ENCODE measurements at regions of chr12 and their contacts with region 1.

Region 1: DNA sequence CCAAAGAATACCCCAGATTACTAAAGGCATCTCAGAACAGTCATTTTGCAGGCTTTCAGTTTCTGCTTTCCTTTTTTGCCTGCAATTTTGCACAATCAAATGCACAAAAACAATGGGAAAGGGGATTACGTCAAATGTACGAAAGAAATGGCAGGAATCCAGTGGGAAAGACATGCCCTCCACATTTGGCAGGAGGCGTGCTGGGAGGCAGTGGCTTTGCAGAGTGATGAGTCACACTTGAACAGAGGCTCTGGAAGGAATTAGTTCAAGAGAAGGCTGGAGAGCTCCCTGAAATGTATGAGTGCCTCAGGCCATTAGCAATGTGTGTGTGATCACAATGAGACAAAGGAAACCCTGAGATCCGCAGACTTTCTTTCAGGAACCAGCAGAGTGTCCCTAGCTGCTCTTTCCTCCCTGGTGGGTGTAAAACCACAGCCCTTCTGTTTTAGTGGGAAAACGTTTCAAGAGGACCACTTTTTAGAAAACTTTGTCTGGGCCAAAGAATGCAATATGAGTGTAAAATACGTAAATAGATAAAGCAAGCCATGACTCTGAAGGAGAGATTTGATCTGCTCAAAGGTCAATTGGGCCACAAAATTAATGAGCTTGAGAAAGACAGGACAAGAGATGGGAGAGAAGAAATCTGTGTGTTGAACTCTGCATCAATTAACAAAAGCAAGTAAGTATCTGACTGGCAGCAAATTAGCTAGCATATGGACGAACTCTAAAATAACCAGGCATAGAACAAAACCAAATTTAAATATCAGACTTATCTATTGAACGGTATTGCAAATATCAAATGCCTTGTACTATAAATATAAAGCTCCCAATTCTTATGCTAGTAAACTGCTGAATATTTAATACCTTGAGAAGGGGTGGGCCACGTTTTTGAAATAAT is 155.4 kb upstream of the PDE3A start:
- DNase-seq: peak; percentile 95
- H3K4me3 ChIP-seq: peak overlapping the region in 2 of 4 donors; percentile 15 to 21
- H3K27ac ChIP-seq: peak overlapping the region; percentile 74 to 88 (median 78)
- H3K4me1 ChIP-seq: peaks cover 0 to 38% (median 32%) of the 10 kb centered on the region in 4 donors
- H3K27me3 ChIP-seq: no peaks in the 10 kb centered on the region
- CTCF ChIP-seq: no peak
- EP300 ChIP-seq: peak in 1 of 4 donors; percentile 71
- POLR2A ChIP-seq: no peak

Region 2: DNA sequence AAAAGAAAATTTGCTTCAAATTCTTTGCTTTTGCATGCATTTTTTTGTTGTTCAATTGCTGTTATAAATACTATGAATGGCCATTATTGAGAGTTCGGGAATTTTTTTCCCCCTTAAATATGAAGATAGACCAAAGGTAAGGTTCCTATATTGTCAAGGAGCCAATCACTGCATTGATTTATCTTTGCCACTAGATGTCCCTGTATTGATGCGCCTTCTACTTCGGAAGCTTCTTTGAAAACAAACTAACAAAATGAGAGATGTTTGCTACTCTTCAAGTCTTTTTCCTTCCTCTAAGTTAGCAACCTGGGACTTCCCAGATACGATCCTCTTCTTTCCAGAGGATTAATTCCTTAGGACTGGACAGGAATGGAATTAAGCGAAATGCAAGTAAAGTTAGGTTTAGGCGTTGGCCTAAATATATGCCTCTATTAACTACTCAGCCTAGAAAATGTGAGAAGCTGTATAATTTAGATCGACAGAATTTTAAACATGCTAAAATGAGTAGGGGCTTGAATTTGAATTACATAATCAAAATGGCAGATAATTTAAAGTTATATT is 455.5 kb before region 1 on chr12:
- intact Hi-C with region 1: loop called (anchors 5 kb)
- DNase-seq: no peak
- H3K4me3 ChIP-seq: no peak overlapping the region
- H3K27ac ChIP-seq: no peak overlapping the region
- H3K4me1 ChIP-seq: peaks cover 0 to 3% (median 0%) of the 10 kb centered on the region in 4 donors
- H3K27me3 ChIP-seq: no peaks in the 10 kb centered on the region
- CTCF ChIP-seq: peak; percentile 16 to 58 (median 48)
- EP300 ChIP-seq: no peak
- POLR2A ChIP-seq: no peak

Region 3: DNA sequence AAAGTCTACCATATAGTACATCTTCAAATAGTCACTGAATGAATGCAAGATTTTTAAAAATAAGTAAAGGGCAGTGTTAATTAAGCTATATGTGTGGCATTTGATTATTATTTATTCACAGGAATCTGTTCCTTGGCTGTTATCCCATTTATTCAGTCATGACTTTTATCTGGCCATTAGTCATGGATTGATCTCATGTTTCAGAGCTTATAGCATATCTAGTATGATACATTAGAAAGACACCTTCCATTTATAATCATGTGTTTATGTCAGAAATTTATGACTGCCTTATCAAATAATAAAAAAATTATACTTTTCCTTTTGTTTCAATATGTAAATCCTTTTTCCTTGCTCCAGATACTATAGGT is 92.6 kb before region 1 on chr12:
- intact Hi-C with region 1: loop called (anchors 5 kb)
- DNase-seq: no peak
- H3K4me3 ChIP-seq: no peak overlapping the region
- H3K27ac ChIP-seq: peak overlapping the region in 3 of 4 donors; percentile 34 to 63 (median 54)
- H3K4me1 ChIP-seq: peaks cover 0 to 39% (median 11%) of the 10 kb centered on the region in 4 donors
- H3K27me3 ChIP-seq: no peaks in the 10 kb centered on the region
- CTCF ChIP-seq: no peak
- EP300 ChIP-seq: no peak
- POLR2A ChIP-seq: no peak

Region 4: GRCh38 chr12:20272801-20273200 is 59.9 kb after region 1 on chr12:
- intact Hi-C with region 1: loop called (anchors 5 kb)
- DNase-seq: no peak
- H3K4me3 ChIP-seq: no peak overlapping the region
- H3K27ac ChIP-seq: peak overlapping the region; percentile 59 to 74 (median 67)
- H3K4me1 ChIP-seq: peaks cover 0 to 64% (median 32%) of the 10 kb centered on the region in 4 donors
- H3K27me3 ChIP-seq: no peaks in the 10 kb centered on the region
- CTCF ChIP-seq: no peak
- EP300 ChIP-seq: no peak
- POLR2A ChIP-seq: no peak

Region 5: GRCh38 chr12:20289512-20289911 is 76.6 kb after region 1 on chr12:
- intact Hi-C with region 1: no loop called
- DNase-seq: no peak
- H3K4me3 ChIP-seq: no peak overlapping the region
- H3K27ac ChIP-seq: no peak overlapping the region
- H3K4me1 ChIP-seq: peaks cover 0 to 8% (median 0%) of the 10 kb centered on the region in 4 donors
- H3K27me3 ChIP-seq: no peaks in the 10 kb centered on the region
- CTCF ChIP-seq: no peak
- EP300 ChIP-seq: no peak
- POLR2A ChIP-seq: no peak

Region 6: GRCh38 chr12:20596061-20596460 is 383.2 kb after region 1 on chr12:
- intact Hi-C with region 1: loop called (anchors 5 kb)
- DNase-seq: no peak
- H3K4me3 ChIP-seq: no peak overlapping the region
- H3K27ac ChIP-seq: no peak overlapping the region
- H3K4me1 ChIP-seq: peaks cover 0 to 41% (median 20%) of the 10 kb centered on the region in 4 donors
- H3K27me3 ChIP-seq: no peaks in the 10 kb centered on the region
- CTCF ChIP-seq: no peak
- EP300 ChIP-seq: no peak
- POLR2A ChIP-seq: no peak

Measured in sigmoid colon (tissue), 7 donors.